ENCODE measurements at regions of chr22 and their contacts with region 1.

Region 1: GRCh38 chr22:48576333-48577013 is 1251.2 kb downstream of the BRD1 start:
- DNase-seq: no peak
- H3K4me3 ChIP-seq: peak overlapping the region; percentile 43
- CTCF ChIP-seq: peak; percentile 66

Region 2: DNA sequence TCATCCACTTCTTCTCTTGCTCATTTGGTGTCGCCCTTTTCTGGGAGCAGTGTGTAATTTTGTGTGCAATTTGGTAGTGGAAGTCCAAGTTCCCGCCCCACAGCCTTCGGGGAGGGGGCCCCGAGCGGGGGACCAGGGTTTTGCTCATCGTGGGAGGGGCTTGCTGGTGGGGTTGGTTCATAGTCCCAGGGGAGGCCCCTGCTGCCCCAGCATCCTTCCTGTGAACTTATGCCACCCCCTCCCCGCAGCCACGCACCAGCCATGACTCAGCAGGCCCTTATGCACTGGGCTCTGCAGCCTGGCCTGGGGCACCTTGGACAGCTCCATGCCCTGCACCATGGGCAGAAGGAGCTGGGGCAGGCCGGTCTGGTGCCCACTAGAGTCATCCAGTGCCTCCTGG is 67.6 kb after region 1 on chr22:
- CTCF ChIA-PET with region 1: no interaction called
- POLR2A ChIA-PET with region 1: no interaction called
- DNase-seq: no peak
- H3K4me3 ChIP-seq: no peak overlapping the region
- CTCF ChIP-seq: no peak

Region 3: GRCh38 chr22:49632199-49633009 is 1055.9 kb after region 1 on chr22:
- CTCF ChIA-PET with region 1: interaction called, 14 read pairs
- POLR2A ChIA-PET with region 1: no interaction called
- DNase-seq: no peak
- H3K4me3 ChIP-seq: peak overlapping the region; percentile 45
- CTCF ChIP-seq: peak; percentile 85